Left ventricle myocardium inferior (tissue), 1 donor: ENCODE measurements at regions of chr15 and their contacts with region 1.

Region 1: GRCh38 chr15:52050416-52050815 is 31.4 kb downstream of the MAPK6 start:
- DNase-seq: no peak
- H3K4me3 ChIP-seq: no peak overlapping the region
- H3K27ac ChIP-seq: no peak overlapping the region
- H3K4me1 ChIP-seq: peaks cover 18% of the 10 kb centered on the region
- H3K27me3 ChIP-seq: no peaks in the 10 kb centered on the region
- CTCF ChIP-seq: no peak

Region 2: DNA sequence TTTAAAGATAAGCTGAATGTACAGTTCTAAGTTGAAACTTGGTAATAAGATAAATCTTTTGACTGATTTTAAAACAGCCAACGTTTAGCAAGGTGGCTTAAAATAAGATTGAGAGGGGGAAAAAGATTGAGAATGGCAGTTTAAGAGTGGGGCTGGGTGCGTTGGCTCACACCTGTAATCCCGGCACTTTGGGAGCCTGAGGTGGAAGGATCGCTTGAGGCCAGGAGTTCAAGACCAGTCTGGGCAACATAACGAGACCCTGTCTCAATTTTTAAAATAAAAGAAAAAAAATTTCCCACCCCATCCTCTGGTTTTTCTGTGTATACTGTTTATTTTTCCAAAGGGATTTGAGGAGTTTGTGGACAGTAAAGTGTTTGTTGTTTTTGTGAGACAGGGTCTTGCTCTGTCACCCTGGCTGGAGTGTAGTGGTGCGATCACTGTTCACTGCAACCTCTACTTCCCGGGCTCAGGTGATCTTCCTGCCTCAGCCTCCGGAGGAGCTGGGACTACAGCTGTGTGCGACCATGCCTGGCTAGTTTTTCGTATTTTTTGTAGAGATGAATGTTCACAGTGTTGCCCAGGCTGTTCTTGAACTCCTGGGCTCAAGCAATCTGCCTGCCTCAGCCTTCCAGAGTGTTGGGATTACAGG is 28.4 kb before region 1 on chr15:
- intact Hi-C with region 1: loop called (anchors 2 kb)
- DNase-seq: no peak
- H3K4me3 ChIP-seq: no peak overlapping the region
- H3K27ac ChIP-seq: peak overlapping the region; percentile 95
- H3K4me1 ChIP-seq: peaks cover 45% of the 10 kb centered on the region
- H3K27me3 ChIP-seq: no peaks in the 10 kb centered on the region
- CTCF ChIP-seq: no peak

Region 3: DNA sequence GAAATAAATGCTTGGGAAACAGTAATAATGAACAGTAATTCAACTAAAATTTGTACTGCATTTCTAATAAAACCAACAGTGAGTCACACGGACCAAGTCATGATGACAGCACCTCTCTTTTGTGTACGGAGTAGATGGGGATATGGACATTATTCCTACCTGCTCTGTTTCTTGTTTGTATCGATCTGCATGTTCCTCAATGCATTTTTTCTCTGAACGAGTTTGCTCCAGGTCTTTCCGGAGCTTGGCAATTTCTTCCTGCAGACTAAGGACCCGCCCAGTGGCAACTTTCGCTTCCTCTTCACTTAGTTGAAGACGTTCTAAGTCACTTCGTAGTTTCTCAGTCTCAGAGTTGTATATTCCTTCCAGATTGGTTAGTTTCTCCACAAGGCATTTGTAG is 319.6 kb after region 1 on chr15:
- intact Hi-C with region 1: no loop called
- DNase-seq: no peak
- H3K4me3 ChIP-seq: no peak overlapping the region
- H3K27ac ChIP-seq: peak overlapping the region; percentile 34
- H3K4me1 ChIP-seq: peaks cover 19% of the 10 kb centered on the region
- H3K27me3 ChIP-seq: no peaks in the 10 kb centered on the region
- CTCF ChIP-seq: no peak